ENCODE measurements at regions of chr7 and their contacts with region 1.

Region 1: DNA sequence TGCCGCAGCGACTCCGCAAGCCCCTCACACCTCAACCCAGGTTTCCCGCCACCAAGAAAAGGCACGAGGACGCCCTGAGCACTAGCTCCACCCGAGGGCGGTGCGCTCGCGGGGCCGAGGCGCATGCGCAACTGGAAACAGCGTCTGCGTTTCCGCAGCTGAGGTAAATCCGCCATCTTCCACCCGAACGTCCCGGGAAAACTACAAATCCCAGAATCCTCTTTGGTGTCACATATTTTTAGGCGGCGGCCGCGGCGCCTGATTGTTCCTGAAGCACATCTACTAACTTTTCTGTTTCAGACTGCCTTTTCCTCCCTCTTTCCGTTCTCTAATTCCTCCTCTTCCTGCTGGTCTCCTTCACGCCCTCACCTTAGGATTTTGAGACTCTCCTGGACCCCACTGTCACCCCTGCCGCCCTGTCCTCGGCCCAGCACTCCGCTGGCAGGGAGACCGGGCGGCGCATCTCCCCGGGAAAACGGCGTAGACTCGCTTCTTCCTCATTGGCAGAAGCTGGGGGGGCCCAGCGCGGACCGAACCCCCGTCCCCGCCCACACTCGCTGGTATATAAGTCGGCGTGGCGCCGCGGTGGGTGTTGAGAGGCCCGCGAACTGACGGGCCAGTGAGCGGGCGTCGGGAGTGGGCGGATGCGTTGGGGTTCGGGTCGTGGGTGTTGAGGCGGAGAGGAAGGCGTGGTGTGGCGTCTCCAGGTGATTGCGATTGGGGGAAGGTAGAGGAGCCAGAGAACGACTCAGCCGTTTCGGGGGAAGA is at the start of gene ZCWPW1:
- DNase-seq: peak; percentile 94
- H3K4me3 ChIP-seq: peak within 1 kb of the TSS; percentile 78 to 95
- H3K27ac ChIP-seq: peak within 1 kb of the TSS; percentile 99 to 100
- H3K4me1 ChIP-seq: peaks cover 17 to 33% of the 10 kb centered on the region in 2 experiments; a peak in 3 of 4 replicates
- H3K27me3 ChIP-seq: no peaks in the 10 kb centered on the region
- CTCF ChIP-seq: no peak
- EP300 ChIP-seq: no peak
- RAD21 ChIP-seq: no peak
- polyA plus RNA-seq, gene ZCWPW1: 3.4 and 4.1 TPM in 2 replicates

Region 2: GRCh38 chr7:100358027-100358865 is 70.1 kb before region 1 on chr7 and contains the start of gene PILRB:
- CTCF ChIA-PET with region 1: no interaction called
- POLR2A ChIA-PET with region 1: no interaction called
- DNase-seq: no peak
- H3K4me3 ChIP-seq: no peak within 1 kb of the TSS
- H3K27ac ChIP-seq: no peak within 1 kb of the TSS
- H3K4me1 ChIP-seq: no peaks in the 10 kb centered on the region
- H3K27me3 ChIP-seq: no peaks in the 10 kb centered on the region
- CTCF ChIP-seq: peak; percentile 20; the same call in 1 of the 2 replicates
- EP300 ChIP-seq: no peak
- RAD21 ChIP-seq: no peak
- polyA plus RNA-seq, gene PILRB: 55.4 and 63.7 TPM in 2 replicates

Region 3: DNA sequence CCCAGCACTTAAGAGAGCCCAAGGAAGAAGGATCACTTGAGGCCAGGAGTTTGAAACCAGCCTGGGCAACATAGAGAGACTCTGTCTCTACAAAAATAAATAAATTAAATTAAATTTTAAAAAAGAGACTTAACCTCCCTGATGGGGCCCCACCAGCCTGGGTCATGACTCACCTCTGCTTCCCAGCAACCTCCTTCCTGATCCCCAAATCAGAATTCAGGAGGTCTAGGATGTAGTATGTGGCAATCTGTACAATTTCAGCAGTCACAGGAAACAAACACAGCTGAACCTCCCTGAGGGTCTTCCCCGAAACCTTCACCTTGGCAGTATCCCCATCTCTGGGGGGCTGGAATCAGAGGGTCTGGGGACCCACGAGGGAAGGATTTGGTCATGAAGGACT is 17.7 kb after region 1 on chr7:
- CTCF ChIA-PET with region 1: interaction called, 14 read pairs
- POLR2A ChIA-PET with region 1: interaction called, 6 read pairs
- DNase-seq: no peak
- H3K4me3 ChIP-seq: no peak overlapping the region
- H3K27ac ChIP-seq: peak overlapping the region in 1 of 2 experiments; percentile 36; a peak in 2 of 4 replicates
- H3K4me1 ChIP-seq: peaks cover 2 to 4% of the 10 kb centered on the region in 2 experiments; a peak in 2 of 4 replicates
- H3K27me3 ChIP-seq: no peaks in the 10 kb centered on the region
- CTCF ChIP-seq: no peak
- EP300 ChIP-seq: no peak
- RAD21 ChIP-seq: no peak

Region 4: GRCh38 chr7:100604028-100604975 is 175.9 kb after region 1 on chr7:
- CTCF ChIA-PET with region 1: no interaction called
- POLR2A ChIA-PET with region 1: interaction called, 11 read pairs
- DNase-seq: peak; percentile 98
- H3K4me3 ChIP-seq: peak overlapping the region; percentile 67 to 76
- H3K27ac ChIP-seq: peak overlapping the region; percentile 69 to 97
- H3K4me1 ChIP-seq: peaks cover 10 to 25% of the 10 kb centered on the region in 2 experiments; a peak in 3 of 4 replicates
- H3K27me3 ChIP-seq: no peaks in the 10 kb centered on the region
- CTCF ChIP-seq: peak; percentile 59
- EP300 ChIP-seq: peak in 1 of 2 experiments; percentile 39; a peak in 1 of 4 replicates
- RAD21 ChIP-seq: no peak